HCT116 (cell line): ENCODE measurements at regions of chr6 and their contacts with region 1.

Region 1: GRCh38 chr6:51398064-51398705 is 579.5 kb downstream of the TFAP2B start:
- DNase-seq: no peak
- ATAC-seq: no peak
- H3K4me3 ChIP-seq: no peak overlapping the region
- H3K27ac ChIP-seq: no peak overlapping the region
- H3K4me1 ChIP-seq: no peaks in the 10 kb centered on the region
- H3K27me3 ChIP-seq: no peaks in the 10 kb centered on the region
- CTCF ChIP-seq: no peak
- POLR2A ChIP-seq: no peak
- RAD21 ChIP-seq: no peak

Region 2: GRCh38 chr6:51456279-51456678 is 58.1 kb after region 1 on chr6:
- CTCF ChIA-PET with region 1: no interaction called
- POLR2A ChIA-PET with region 1: no interaction called
- RAD21 ChIA-PET with region 1: no interaction called
- intact Hi-C with region 1: loop called (anchors 2 kb)
- DNase-seq: no peak
- ATAC-seq: no peak
- H3K4me3 ChIP-seq: no peak overlapping the region
- H3K27ac ChIP-seq: no peak overlapping the region
- H3K4me1 ChIP-seq: no peaks in the 10 kb centered on the region
- H3K27me3 ChIP-seq: no peaks in the 10 kb centered on the region
- CTCF ChIP-seq: no peak
- POLR2A ChIP-seq: no peak
- RAD21 ChIP-seq: no peak